ENCODE measurements at regions of chr6 and their contacts with region 1.

Region 1: DNA sequence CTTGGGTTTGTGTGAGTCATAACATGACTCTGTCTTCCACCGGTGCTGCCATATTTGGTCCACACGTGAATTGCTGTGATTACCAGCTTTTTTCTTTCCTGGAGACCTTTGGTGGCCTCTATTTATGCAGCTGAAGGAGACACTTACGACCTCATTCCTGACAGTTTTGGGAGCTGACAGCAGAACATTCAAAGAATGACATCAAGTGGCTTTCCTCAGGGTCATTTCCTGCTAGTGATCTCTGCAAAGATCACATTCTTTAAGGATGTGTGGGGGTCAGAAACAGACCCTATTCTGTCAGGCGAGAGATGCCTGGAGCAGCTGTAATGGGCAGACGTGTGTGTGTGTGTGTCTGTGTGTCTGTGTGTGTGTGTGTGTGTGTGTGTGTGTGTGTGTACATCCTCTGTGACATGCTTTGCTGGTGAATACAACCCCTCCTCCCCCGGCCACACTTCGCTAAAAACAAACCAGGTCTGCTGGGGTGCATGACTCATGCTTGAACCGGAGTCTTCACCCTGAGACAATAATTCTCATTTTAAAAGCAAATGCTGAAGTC is 115.6 kb downstream of the TMEM170B start:
- DNase-seq: no peak
- ATAC-seq: peak; percentile 31
- H3K4me3 Mint-ChIP-seq: no peak overlapping the region
- H3K27ac Mint-ChIP-seq: no peak overlapping the region
- H3K4me1 Mint-ChIP-seq: no peaks in the 10 kb centered on the region
- H3K27me3 Mint-ChIP-seq: peaks cover 9% of the 10 kb centered on the region
- CTCF ChIP-seq: no peak

Region 2: GRCh38 chr6:11595903-11596302 is 57.2 kb before region 1 on chr6:
- CTCF ChIA-PET with region 1: no interaction called
- POLR2A ChIA-PET with region 1: no interaction called
- intact Hi-C with region 1: no loop called
- DNase-seq: no peak
- ATAC-seq: no peak
- H3K4me3 Mint-ChIP-seq: no peak overlapping the region
- H3K27ac Mint-ChIP-seq: no peak overlapping the region
- H3K4me1 Mint-ChIP-seq: no peaks in the 10 kb centered on the region
- H3K27me3 Mint-ChIP-seq: peaks cover 9% of the 10 kb centered on the region
- CTCF ChIP-seq: no peak

Region 3: DNA sequence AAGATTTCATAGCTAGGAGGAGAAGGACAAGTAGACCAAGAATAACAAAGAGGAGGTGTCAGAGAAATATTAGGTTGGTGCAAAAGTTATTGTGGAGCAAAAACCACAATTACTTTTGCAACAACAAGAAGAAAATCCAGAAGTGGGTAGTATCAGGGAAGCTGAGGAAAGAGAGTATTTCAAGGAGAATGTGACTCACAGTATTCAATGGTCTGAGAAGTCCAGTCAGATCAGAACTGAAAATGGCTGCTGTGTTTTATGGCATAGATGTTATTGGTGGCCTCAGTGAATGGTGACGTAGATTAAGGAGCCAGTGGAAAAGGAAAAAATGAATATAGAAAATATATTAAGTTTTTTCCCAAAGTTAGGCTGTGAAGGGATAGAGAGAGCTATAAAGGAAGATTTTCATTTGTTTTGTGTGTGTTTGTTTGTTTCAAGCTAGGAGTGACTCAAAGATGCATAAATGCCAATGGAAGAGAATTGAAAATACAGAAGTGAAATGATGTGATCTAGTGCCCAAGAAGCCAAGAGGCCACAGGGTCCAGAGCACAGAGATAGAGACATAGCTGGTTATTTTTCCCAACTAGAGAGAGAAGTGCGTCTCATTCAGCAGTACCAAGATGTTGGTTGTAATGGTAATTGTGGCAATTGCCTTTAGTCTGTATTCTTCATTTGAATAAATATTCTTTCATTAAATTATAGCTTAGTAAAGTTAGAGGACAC is 12.7 kb after region 1 on chr6:
- CTCF ChIA-PET with region 1: interaction called, 15 read pairs
- POLR2A ChIA-PET with region 1: interaction called, 4 read pairs
- intact Hi-C with region 1: no loop called
- DNase-seq: no peak
- ATAC-seq: no peak
- H3K4me3 Mint-ChIP-seq: no peak overlapping the region
- H3K27ac Mint-ChIP-seq: no peak overlapping the region
- H3K4me1 Mint-ChIP-seq: no peaks in the 10 kb centered on the region
- H3K27me3 Mint-ChIP-seq: peaks cover 17% of the 10 kb centered on the region
- CTCF ChIP-seq: no peak

Region 4: GRCh38 chr6:12075067-12075563 is 422.0 kb after region 1 on chr6:
- CTCF ChIA-PET with region 1: interaction called, 8 read pairs
- POLR2A ChIA-PET with region 1: no interaction called
- intact Hi-C with region 1: loop called (anchors 1 kb)
- DNase-seq: no peak
- ATAC-seq: peak; percentile 25
- H3K4me3 Mint-ChIP-seq: no peak overlapping the region
- H3K27ac Mint-ChIP-seq: no peak overlapping the region
- H3K4me1 Mint-ChIP-seq: peaks cover 33% of the 10 kb centered on the region
- H3K27me3 Mint-ChIP-seq: no peaks in the 10 kb centered on the region
- CTCF ChIP-seq: no peak

Region 5: GRCh38 chr6:12289933-12290820 is 637.1 kb after region 1 on chr6 and contains the start of gene EDN1:
- CTCF ChIA-PET with region 1: interaction called, 42 read pairs
- POLR2A ChIA-PET with region 1: interaction called, 6 read pairs
- intact Hi-C with region 1: loop called (anchors 1 kb)
- DNase-seq: peak; percentile 44
- ATAC-seq: peak; percentile 84
- H3K4me3 Mint-ChIP-seq: peak within 1 kb of the TSS; percentile 86
- H3K27ac Mint-ChIP-seq: no peak within 1 kb of the TSS
- H3K4me1 Mint-ChIP-seq: peaks cover 15% of the 10 kb centered on the region
- H3K27me3 Mint-ChIP-seq: peaks cover 36% of the 10 kb centered on the region
- CTCF ChIP-seq: no peak
- total RNA-seq, gene EDN1: 0.56 and 0.91 TPM in 2 replicates

Region 6: DNA sequence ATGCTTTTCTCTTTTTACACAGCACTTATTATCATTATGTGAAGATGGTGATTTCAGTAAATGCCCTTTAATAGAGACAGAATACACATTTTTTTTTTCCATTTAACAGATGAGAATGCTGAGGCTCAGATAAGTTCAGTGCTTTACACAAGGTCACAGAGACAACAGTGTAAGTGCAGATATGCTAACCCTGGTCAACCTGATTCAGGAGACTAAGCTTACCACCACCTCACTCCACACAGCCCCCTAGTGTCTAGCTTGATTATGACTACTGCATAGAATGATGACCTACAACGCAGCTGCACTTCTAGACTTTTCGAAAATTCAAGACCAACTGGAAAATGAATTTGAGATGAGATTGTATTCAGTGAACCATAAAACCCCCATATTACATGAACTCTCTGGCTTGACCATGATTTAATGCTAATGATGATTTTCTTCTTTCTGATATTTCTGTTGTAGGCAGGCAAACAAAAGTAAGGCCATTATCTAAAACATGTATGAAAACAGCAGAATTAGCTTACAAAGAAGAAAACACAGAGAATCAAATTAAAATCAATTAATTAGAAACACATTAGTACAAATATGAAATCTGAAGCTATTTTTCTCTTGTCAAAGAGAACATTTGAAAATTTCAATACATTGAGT is 851.3 kb after region 1 on chr6:
- CTCF ChIA-PET with region 1: interaction called, 22 read pairs
- POLR2A ChIA-PET with region 1: no interaction called
- intact Hi-C with region 1: loop called (anchors 1 kb)
- DNase-seq: no peak
- ATAC-seq: peak; percentile 67
- H3K4me3 Mint-ChIP-seq: no peak overlapping the region
- H3K27ac Mint-ChIP-seq: no peak overlapping the region
- H3K4me1 Mint-ChIP-seq: no peaks in the 10 kb centered on the region
- H3K27me3 Mint-ChIP-seq: peaks cover 3% of the 10 kb centered on the region
- CTCF ChIP-seq: no peak

Region 7: DNA sequence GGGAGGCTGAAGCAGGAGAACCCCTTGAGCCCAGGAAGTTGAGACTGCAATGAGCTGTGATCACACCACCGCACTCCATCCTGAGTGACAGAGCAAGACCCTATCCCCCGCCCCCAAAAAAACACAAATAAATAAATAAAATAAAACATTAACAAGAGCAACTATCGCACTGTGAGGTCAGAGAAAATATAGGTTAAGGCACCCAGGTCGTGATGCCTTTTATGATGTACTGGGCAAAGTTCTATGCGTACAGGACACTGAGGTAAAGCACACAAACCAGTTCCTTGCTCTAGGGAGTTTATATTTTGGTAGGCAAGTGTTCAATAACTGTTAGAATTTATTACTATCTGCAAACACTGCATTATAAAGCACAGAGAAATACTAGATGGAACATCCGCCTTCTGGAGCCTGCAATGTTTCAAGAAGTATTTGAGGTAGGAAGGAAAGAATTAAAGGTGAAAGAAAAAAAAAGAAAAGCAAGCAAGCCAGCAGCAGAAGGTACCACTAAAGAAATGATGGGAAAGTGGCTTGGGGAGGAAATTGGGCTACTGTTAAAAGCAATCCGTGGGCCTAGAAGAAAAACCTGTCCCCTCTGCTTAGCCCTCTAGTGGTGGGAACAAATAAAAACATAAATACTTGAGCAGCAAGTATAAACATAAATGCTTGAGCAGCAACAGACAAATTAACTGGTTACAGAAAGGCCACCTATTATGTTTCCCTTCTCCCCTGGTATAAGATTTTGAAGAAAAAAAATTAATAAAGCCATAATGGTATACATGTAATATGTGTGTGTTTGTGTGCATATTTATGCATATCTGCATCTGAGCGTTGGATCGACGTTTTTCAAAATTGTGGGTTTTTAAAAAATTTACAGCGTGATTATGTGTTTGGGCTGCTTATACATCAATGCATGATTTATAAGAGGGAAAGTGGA is 1191.5 kb after region 1 on chr6:
- CTCF ChIA-PET with region 1: no interaction called
- POLR2A ChIA-PET with region 1: no interaction called
- intact Hi-C with region 1: loop called (anchors 1 kb)
- DNase-seq: no peak
- ATAC-seq: no peak
- H3K4me3 Mint-ChIP-seq: no peak overlapping the region
- H3K27ac Mint-ChIP-seq: no peak overlapping the region
- H3K4me1 Mint-ChIP-seq: no peaks in the 10 kb centered on the region
- H3K27me3 Mint-ChIP-seq: peaks cover 11% of the 10 kb centered on the region
- CTCF ChIP-seq: no peak

Region 8: DNA sequence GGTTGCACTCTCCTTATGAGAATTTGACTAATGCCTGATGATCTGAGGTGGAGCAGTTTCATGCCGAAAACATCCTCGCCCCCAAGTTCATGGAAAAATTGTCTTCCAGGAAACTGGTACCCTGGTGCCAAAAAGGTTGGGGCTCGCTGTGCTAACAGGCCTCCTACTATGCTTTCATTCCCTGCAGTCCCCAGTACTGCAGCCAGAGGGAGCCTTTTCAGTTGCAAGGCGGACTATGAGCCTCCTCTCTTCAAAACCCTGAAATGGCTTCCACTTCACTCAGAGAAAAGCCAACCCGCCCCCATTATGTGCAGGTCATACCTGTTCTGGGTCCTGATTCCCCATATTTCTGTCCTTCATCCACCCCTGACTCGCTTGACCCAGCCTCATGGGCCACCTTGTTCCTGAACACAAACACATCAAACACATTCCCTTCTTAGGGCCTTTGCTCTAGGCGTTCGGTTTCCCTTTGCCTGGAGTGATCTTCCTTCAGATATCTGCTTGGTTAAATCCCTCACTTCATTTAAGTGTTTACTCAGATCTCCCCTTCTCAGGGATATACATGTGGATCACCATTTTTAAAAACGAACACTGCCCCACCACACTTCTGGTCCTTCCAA is 1237.2 kb after region 1 on chr6:
- CTCF ChIA-PET with region 1: interaction called, 14 read pairs
- POLR2A ChIA-PET with region 1: no interaction called
- intact Hi-C with region 1: loop called (anchors 1 kb)
- DNase-seq: no peak
- ATAC-seq: no peak
- H3K4me3 Mint-ChIP-seq: no peak overlapping the region
- H3K27ac Mint-ChIP-seq: no peak overlapping the region
- H3K4me1 Mint-ChIP-seq: peaks cover 3% of the 10 kb centered on the region
- H3K27me3 Mint-ChIP-seq: peaks cover 5% of the 10 kb centered on the region
- CTCF ChIP-seq: no peak